ENCODE measurements at regions of chr19 and their contacts with region 1.

Region 1: DNA sequence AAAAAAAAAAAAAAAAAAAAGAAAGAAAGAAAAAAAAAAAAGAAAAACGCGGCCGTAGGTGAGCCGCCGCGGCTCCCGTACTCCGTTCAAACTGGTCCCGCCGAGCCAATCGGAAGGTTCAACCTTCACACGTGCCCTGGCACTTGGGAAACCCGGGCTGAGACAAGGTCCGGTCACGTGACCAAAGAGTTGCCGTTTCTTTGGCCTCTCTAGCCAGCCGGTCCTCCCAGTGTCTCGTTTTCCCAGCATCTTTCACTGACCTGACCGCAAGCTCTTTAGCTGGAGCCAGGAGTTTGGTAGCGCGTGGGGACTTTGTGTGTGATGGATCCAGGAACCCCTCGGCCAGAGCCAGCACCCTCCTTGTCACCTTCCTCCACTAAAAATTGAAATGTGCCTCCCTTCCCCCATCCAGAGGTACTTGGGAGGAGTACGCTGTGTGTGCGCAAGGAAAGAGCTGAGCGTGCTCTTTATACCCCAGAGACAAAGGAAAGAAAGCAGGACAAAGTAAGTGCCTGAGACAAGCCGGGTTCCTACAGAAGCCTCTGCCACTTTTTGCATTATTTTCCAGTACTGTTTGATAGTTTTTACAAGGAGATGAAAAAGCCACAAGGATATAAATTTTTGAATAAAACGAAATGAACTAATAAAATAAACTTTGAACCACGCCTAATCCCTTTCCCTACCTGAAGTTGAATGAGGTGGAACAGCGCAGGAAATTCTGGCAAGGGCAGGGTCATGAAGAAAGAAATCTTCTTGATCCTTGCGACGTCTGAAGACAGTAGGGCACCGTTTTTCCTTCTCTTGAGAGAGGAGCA is 959 bp downstream of the TNPO2 start:
- DNase-seq: peak; percentile 81 to 99 (median 92)
- ATAC-seq: peak; percentile 88
- H3K4me3 ChIP-seq: peak overlapping the region; percentile 78 to 85
- H3K4me3 Mint-ChIP-seq: peak overlapping the region; percentile 93
- H3K27ac ChIP-seq: peak overlapping the region; percentile 55 to 80
- H3K27ac Mint-ChIP-seq: peak overlapping the region; percentile 89
- H3K4me1 ChIP-seq: peaks cover 28% of the 10 kb centered on the region
- H3K4me1 Mint-ChIP-seq: peaks cover 37% of the 10 kb centered on the region
- H3K27me3 ChIP-seq: no peaks in the 10 kb centered on the region
- H3K27me3 Mint-ChIP-seq: no peaks in the 10 kb centered on the region
- CTCF ChIP-seq: no peak

Region 2: DNA sequence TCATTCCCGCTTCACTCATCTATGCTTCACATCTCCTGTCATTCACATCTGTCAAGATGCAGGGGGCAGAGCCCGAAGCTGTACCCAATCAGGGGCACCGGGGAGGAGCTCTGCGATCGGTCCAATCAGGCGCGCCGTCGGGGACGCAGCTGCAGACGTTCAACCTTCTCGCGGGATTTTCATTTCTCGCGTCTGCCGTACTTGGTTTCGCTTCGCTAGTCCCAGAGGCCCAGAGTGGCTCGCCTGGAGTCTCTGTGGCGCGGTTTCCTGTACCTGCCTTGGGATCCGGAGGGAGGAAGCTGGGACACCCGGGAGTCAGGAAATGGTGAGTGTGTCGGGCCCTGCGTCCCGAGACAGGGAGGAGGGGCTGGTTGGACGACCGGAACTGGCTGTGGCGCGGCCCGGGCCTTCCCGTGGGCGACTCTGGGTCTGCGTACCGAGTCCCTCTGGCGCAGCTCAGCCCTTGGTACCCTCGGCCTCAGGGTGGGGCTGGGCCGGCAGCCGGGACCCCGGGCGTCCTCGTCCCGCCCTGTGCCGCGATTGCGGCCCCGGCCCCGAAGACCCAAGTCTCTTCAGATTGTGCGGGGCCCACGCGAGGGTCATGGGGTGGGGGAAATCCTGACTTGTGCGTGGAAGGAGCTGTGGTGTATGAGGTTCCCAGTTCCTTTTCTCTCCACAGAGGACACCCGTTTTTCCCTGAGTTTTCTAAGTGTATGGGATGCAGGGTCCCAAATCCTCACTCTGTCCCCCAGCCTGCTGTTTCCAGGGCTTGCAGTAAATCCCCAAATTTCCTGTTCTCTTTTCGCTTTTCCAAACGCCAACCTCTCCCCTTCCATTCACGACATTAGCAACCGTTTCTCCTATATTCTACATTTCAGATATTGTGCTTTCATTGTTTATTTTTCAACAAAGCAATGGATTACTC is 559.6 kb before region 1 on chr19 and contains the start of gene ZNF136:
- CTCF ChIA-PET with region 1: no interaction called
- POLR2A ChIA-PET with region 1: no interaction called
- intact Hi-C with region 1: loop called in 1 of 2 experiments (anchors 5 kb)
- DNase-seq: peak; percentile 84 to 97 (median 91)
- ATAC-seq: peak; percentile 99
- H3K4me3 ChIP-seq: peak within 1 kb of the TSS; percentile 83 to 86
- H3K4me3 Mint-ChIP-seq: peak within 1 kb of the TSS; percentile 96
- H3K27ac ChIP-seq: peak within 1 kb of the TSS; percentile 93 to 96
- H3K27ac Mint-ChIP-seq: peak within 1 kb of the TSS; percentile 98
- H3K4me1 ChIP-seq: peaks cover 25% of the 10 kb centered on the region
- H3K4me1 Mint-ChIP-seq: peaks cover 46% of the 10 kb centered on the region
- H3K27me3 ChIP-seq: no peaks in the 10 kb centered on the region
- H3K27me3 Mint-ChIP-seq: no peaks in the 10 kb centered on the region
- CTCF ChIP-seq: no peak
- total RNA-seq, gene ZNF136: 41.7 to 42.1 TPM

Region 3: GRCh38 chr19:12636631-12637030 is 86.1 kb before region 1 on chr19:
- CTCF ChIA-PET with region 1: no interaction called
- POLR2A ChIA-PET with region 1: no interaction called
- intact Hi-C with region 1: no loop called
- DNase-seq: no peak
- ATAC-seq: no peak
- H3K4me3 ChIP-seq: no peak overlapping the region
- H3K4me3 Mint-ChIP-seq: no peak overlapping the region
- H3K27ac ChIP-seq: no peak overlapping the region
- H3K27ac Mint-ChIP-seq: no peak overlapping the region
- H3K4me1 ChIP-seq: peaks cover 19% of the 10 kb centered on the region
- H3K4me1 Mint-ChIP-seq: peaks cover 23% of the 10 kb centered on the region
- H3K27me3 ChIP-seq: no peaks in the 10 kb centered on the region
- H3K27me3 Mint-ChIP-seq: no peaks in the 10 kb centered on the region
- CTCF ChIP-seq: no peak

Region 4: DNA sequence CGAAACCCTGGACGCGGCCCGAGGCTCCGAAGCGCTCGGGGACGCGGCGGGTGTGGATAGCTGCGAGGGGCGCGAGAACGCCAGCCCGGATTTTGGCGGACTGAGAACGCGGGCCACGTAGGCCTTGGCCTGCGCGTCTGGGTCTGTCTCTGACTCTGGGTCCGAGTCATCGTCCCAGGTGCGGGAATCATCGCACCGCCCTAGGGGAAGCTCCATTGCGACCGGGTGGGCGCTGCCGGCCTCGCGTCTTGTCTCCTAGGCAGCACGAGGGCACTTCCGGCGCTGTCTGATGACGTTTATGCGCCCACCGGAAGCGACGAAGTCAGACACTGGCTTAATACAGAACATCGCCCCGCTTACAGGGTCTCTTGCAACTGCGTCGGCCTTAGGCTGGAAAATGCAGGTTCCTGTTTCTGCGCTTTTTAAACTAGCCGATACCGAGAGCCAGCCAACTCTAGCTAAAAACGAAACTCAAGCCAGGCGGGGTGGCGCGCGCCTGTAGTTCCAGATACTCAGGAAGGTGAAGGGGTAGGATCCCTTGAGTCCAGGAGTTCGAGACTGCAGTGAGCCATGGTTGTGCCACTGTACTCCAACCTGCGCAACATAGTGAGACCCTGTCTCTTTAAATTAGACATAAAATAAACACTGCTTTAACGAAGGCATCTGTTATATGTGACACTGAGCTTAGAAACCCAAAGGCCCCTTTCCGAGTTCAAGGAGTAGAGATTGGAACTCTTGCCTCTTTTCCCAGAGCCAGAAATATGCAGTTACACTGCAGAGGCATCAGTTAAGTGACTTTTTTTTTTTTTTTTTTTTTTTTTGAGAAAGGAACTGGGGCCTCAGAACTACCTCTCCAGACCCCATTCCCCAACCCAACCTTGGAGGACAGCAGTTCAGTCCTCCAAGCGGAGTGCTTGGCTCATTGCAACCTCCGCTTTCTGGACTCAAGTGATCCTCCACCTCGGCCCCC is 26.1 kb before region 1 on chr19 and contains the start of gene FBXW9:
- CTCF ChIA-PET with region 1: interaction called, 4 read pairs
- POLR2A ChIA-PET with region 1: interaction called, 13 read pairs
- intact Hi-C with region 1: loop called (anchors 1 kb)
- DNase-seq: peak; percentile 95 to 99 (median 98)
- ATAC-seq: peak; percentile 92
- H3K4me3 ChIP-seq: peak within 1 kb of the TSS; percentile 88 to 89
- H3K4me3 Mint-ChIP-seq: peak within 1 kb of the TSS; percentile 90
- H3K27ac ChIP-seq: peak within 1 kb of the TSS; percentile 87 to 91
- H3K27ac Mint-ChIP-seq: peak within 1 kb of the TSS; percentile 97
- H3K4me1 ChIP-seq: peaks cover 14% of the 10 kb centered on the region
- H3K4me1 Mint-ChIP-seq: peaks cover 11% of the 10 kb centered on the region
- H3K27me3 ChIP-seq: no peaks in the 10 kb centered on the region
- H3K27me3 Mint-ChIP-seq: no peaks in the 10 kb centered on the region
- CTCF ChIP-seq: no peak
- total RNA-seq, gene FBXW9: 2.3 to 2.8 TPM

Measured in CD8-positive, alpha-beta T cell (primary cell).